ENCODE measurements at regions of chr1 and their contacts with region 1.

Region 1: GRCh38 chr1:45913183-45913683 is 109.8 kb downstream of the MAST2 start:
- DNase-seq: peak; percentile 59
- ATAC-seq: peak; percentile 95

Region 2: GRCh38 chr1:46003315-46003714 is 90.1 kb after region 1 on chr1:
- intact Hi-C with region 1: no loop called
- DNase-seq: no peak
- ATAC-seq: no peak

Region 3: GRCh38 chr1:46021046-46021996 is 108.1 kb after region 1 on chr1:
- intact Hi-C with region 1: loop called (anchors 10 kb)
- DNase-seq: no peak
- ATAC-seq: peak; percentile 61

Region 4: GRCh38 chr1:46466477-46467182 is 553.4 kb after region 1 on chr1:
- intact Hi-C with region 1: no loop called
- DNase-seq: peak; percentile 59
- ATAC-seq: peak; percentile 86

Measured in left ventricle myocardium superior (tissue), 1 donor.